Activated naive CD4-positive, alpha-beta T cell treated with anti-CD3 and anti-CD28 coated beads for 36 hours (primary cell): ENCODE measurements at regions of chr2 and their contacts with region 1.

Region 1: DNA sequence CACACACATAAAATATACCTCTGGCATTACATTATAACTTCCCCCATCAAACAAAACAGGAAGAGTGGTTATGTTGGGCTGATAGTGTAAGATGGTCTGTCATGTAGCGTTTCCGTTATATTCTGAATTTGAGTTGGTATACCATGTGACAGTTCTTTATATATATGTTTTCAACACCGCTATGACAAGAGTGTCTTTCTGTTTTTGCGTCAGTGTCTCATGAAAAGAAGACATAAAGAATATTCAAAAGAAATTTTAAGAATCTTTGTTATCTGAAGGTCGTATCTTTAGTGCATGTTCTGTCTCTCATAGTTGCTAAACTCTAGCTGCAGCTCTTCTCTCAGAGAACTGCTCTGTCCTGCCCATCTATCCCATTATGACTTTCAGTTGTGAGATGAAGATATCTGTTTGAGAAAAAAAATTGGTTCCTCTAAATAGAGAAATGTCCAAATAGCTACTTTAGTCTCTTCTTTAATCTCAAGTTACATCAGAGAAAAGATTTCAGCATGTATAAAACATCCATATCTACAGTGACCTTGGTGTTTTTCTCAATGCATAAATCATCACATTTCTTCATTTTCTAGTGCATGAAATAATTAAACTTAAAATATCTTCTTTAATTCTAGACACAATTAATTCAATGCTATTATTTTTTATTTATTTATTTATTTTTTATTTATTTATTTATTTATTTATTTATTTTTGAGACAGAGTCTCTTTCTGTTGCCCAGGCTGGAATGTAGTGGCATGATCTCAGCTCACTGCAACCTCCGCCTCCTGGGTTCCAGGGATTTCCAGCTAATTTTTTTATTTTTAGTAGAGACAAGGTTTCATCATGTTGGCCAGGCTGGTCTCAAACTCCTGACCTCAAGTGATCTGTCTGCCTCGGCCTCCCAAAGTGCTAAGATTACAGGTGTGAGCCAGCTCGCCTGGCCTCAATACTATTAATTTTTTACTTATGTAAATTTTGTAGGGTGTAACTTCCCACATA is 24.3 kb upstream of the PSME4 start:
- DNase-seq: no peak
- H3K4me3 Mint-ChIP-seq: peak overlapping the region; percentile 64
- H3K27ac Mint-ChIP-seq: peak overlapping the region; percentile 85
- H3K4me1 Mint-ChIP-seq: peaks cover 28% of the 10 kb centered on the region
- H3K27me3 Mint-ChIP-seq: no peaks in the 10 kb centered on the region

Region 2: GRCh38 chr2:54013996-54014395 is 18.9 kb after region 1 on chr2:
- CTCF ChIA-PET with region 1: interaction called, 3 read pairs
- intact Hi-C with region 1: loop called (anchors 1 kb)
- DNase-seq: no peak
- H3K4me3 Mint-ChIP-seq: peak overlapping the region; percentile 30
- H3K27ac Mint-ChIP-seq: no peak overlapping the region
- H3K4me1 Mint-ChIP-seq: peaks cover 32% of the 10 kb centered on the region
- H3K27me3 Mint-ChIP-seq: no peaks in the 10 kb centered on the region

Region 3: GRCh38 chr2:54041135-54041534 is 46.0 kb after region 1 on chr2:
- CTCF ChIA-PET with region 1: no interaction called
- intact Hi-C with region 1: loop called (anchors 1 kb)
- DNase-seq: peak; percentile 73
- H3K4me3 Mint-ChIP-seq: no peak overlapping the region
- H3K27ac Mint-ChIP-seq: no peak overlapping the region
- H3K4me1 Mint-ChIP-seq: no peaks in the 10 kb centered on the region
- H3K27me3 Mint-ChIP-seq: no peaks in the 10 kb centered on the region